ENCODE measurements at regions of chr14 and their contacts with region 1.

Region 1: DNA sequence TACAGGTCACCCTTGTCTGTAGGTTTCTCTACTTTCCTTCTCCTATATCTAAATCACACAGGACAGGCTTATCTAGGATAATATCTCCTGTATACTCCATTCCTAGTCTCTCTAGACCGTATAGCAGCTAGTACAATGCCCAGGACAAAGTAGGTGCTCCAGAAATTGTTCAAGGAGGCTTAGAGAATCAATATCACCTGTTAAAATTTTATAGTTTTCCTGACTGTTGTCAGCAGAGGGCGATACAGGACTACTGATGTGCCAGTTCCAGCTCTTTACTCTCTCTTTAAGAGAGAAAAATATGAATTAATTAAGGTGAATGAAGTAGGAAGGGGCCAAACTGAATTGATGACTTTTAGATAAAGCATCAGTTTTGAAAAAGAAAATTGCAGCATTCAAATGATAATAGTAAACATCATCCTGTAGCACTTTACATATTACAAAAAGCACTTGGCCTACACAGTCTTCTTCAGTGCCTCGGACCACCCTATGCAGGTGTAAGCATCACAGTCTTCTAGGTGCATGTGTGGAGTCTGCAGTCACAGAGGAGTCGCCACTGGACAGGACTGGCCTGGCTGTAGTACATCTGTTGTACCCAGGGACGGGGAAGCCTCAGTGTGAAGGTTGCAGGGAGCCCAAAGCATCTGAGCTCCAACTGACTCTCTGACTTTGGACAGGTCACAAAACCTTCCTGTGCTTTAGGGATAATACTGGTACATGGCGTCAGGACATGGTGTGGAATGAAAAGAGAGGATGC is 61.9 kb upstream of the MAX start:
- DNase-seq: peak; percentile 70
- H3K4me3 Mint-ChIP-seq: no peak overlapping the region
- H3K27ac Mint-ChIP-seq: no peak overlapping the region
- H3K4me1 Mint-ChIP-seq: peaks cover 19% of the 10 kb centered on the region
- H3K27me3 Mint-ChIP-seq: no peaks in the 10 kb centered on the region
- CTCF ChIP-seq: peak; percentile 74

Region 2: GRCh38 chr14:65035049-65035448 is 129.2 kb before region 1 on chr14:
- CTCF ChIA-PET with region 1: no interaction called
- POLR2A ChIA-PET with region 1: no interaction called
- intact Hi-C with region 1: no loop called
- DNase-seq: no peak
- H3K4me3 Mint-ChIP-seq: no peak overlapping the region
- H3K27ac Mint-ChIP-seq: no peak overlapping the region
- H3K4me1 Mint-ChIP-seq: peaks cover 5% of the 10 kb centered on the region
- H3K27me3 Mint-ChIP-seq: no peaks in the 10 kb centered on the region
- CTCF ChIP-seq: no peak

Region 3: DNA sequence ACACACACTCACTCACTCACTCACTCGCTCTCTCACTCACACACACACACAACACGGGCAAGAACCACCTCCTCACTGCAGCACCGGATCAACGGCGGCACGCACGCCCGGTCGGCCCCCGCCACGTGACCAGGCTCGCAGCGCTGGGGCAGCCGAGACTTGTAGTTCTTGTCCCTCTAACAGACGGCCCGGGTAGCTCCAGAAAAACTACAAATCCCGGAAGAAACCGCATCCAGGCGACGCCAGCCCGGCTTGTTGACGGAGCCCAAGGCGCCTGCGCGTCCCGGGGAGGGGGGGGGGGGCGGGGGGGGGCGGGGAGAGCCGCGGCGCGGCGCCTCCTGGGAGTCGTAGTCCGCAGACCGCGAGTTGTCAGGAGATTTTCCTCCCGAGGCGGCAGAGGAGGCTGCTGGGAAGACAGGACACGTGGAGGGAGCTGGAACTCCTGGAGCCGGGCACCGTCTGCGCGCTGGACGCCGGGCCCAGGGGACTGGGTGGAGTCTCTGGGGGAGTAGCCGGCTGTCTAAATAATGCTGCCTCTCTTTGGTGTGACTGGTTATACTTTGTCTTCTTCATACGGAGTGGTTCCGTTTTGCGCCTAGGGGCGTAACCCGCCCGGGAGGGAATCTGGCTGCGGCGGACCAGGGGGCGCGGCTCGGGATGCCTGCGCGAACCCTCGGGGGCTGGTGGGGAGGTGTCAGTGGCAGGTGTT is 61.7 kb before region 1 on chr14 and contains the start of gene MAX:
- CTCF ChIA-PET with region 1: interaction called, 3 read pairs
- POLR2A ChIA-PET with region 1: no interaction called
- intact Hi-C with region 1: loop called (anchors 5 kb)
- DNase-seq: peak; percentile 98
- H3K4me3 Mint-ChIP-seq: peak within 1 kb of the TSS; percentile 74
- H3K27ac Mint-ChIP-seq: peak within 1 kb of the TSS; percentile 94
- H3K4me1 Mint-ChIP-seq: peaks cover 17% of the 10 kb centered on the region
- H3K27me3 Mint-ChIP-seq: no peaks in the 10 kb centered on the region
- CTCF ChIP-seq: no peak
- total RNA-seq, gene MAX: 116 and 125 TPM in 2 replicates

Region 4: GRCh38 chr14:65356327-65356852 is 192.1 kb after region 1 on chr14:
- CTCF ChIA-PET with region 1: interaction called, 5 read pairs
- POLR2A ChIA-PET with region 1: interaction called, 4 read pairs
- intact Hi-C with region 1: loop called (anchors 5 kb)
- DNase-seq: peak; percentile 99
- H3K4me3 Mint-ChIP-seq: peak overlapping the region; percentile 39
- H3K27ac Mint-ChIP-seq: peak overlapping the region; percentile 88
- H3K4me1 Mint-ChIP-seq: peaks cover 42% of the 10 kb centered on the region
- H3K27me3 Mint-ChIP-seq: no peaks in the 10 kb centered on the region
- CTCF ChIP-seq: no peak

Region 5: DNA sequence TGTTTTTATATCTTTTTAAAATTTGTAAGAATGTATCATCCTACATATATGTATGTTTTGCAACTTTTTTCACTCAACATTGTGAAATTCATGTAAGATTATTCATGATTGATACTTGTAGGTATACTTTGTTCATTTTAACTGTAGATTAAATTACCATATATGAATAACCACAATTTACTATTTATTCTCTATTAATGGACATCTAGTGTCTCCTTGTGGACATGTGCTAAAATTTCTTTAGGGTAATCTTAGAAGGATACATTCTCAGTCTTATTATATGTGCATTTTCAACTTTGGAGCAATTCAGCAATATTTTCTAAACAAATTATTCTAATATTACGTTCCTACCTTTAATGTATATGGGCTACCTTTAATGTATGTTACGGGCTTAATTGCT is 440.7 kb after region 1 on chr14:
- CTCF ChIA-PET with region 1: interaction called, 6 read pairs
- POLR2A ChIA-PET with region 1: no interaction called
- intact Hi-C with region 1: loop called (anchors 1 kb)
- DNase-seq: peak; percentile 6
- H3K4me3 Mint-ChIP-seq: no peak overlapping the region
- H3K27ac Mint-ChIP-seq: no peak overlapping the region
- H3K4me1 Mint-ChIP-seq: no peaks in the 10 kb centered on the region
- H3K27me3 Mint-ChIP-seq: no peaks in the 10 kb centered on the region
- CTCF ChIP-seq: peak; percentile 26

Region 6: DNA sequence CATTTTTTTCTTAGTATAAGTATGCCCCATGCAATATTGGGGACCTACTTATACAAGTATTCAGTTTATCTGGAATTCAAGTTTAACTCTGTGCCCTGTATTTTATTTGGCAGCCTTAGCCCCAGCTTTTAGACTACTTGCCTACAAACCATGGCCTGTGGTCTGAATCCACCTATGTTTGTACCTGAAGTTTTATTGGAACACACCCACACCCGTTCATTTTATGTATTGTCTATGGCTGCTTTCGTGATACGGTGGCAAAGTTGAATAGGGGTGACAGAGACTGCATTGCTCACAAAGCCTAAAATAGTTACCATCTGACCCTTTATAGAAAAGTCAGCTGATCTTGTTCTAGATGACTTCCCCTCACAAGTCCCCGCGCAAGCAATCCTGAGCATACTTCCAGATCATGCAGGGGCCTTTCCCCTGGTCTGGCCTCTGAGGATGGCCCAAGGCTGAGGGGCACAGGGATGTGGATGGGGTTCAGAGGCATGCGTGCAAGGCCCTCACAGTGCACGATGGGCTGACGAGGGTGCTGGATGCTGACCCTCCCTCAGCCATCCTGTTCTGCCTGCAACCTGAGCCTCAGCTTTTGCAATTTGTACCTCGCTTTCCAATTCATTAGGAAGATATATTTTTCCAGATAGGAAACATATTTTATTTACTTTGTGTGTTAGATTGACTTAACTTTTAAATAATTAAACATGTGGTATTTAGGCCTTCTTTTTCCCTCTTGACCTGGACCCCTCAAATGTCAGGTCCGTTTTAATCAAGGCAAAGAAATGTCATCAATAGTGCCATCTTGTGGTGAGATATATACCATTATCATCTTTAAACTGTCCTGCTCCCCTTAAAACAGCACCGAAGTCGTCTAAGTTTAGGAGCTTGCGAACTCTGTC is 794.7 kb after region 1 on chr14:
- CTCF ChIA-PET with region 1: interaction called, 25 read pairs
- POLR2A ChIA-PET with region 1: no interaction called
- intact Hi-C with region 1: loop called (anchors 1 kb)
- DNase-seq: peak; percentile 50
- H3K4me3 Mint-ChIP-seq: no peak overlapping the region
- H3K27ac Mint-ChIP-seq: no peak overlapping the region
- H3K4me1 Mint-ChIP-seq: no peaks in the 10 kb centered on the region
- H3K27me3 Mint-ChIP-seq: peaks cover 6% of the 10 kb centered on the region
- CTCF ChIP-seq: peak; percentile 44

Region 7: GRCh38 chr14:66070509-66071319 is 906.5 kb after region 1 on chr14:
- CTCF ChIA-PET with region 1: interaction called, 4 read pairs
- POLR2A ChIA-PET with region 1: no interaction called
- intact Hi-C with region 1: loop called (anchors 1 kb)
- DNase-seq: peak; percentile 62
- H3K4me3 Mint-ChIP-seq: no peak overlapping the region
- H3K27ac Mint-ChIP-seq: no peak overlapping the region
- H3K4me1 Mint-ChIP-seq: peaks cover 15% of the 10 kb centered on the region
- H3K27me3 Mint-ChIP-seq: peaks cover 25% of the 10 kb centered on the region
- CTCF ChIP-seq: peak; percentile 84

Region 8: DNA sequence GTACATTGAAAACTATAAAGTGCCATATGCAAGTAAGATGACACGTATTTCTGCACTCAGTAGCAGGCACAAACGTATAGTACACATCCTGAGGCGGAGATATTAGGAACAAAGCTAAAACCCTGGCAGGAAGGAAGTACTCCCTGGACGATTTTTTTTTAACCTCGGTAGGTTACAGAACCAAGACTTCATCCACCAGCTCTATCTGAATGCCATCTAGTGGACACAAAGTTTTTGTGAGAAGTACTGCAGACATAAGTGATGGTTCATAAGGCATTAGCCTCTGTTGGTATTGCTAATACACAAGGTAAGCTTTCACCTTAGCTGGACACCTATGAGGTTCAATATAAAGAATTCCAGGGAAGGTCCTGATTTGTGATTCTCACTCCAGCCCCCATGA is 1238.9 kb after region 1 on chr14:
- CTCF ChIA-PET with region 1: interaction called, 7 read pairs
- POLR2A ChIA-PET with region 1: no interaction called
- intact Hi-C with region 1: loop called (anchors 10 kb)
- DNase-seq: peak; percentile 54
- H3K4me3 Mint-ChIP-seq: no peak overlapping the region
- H3K27ac Mint-ChIP-seq: no peak overlapping the region
- H3K4me1 Mint-ChIP-seq: no peaks in the 10 kb centered on the region
- H3K27me3 Mint-ChIP-seq: no peaks in the 10 kb centered on the region
- CTCF ChIP-seq: peak; percentile 28

Measured in MCF 10A (cell line).